CD4-positive, alpha-beta memory T cell (primary cell): ENCODE measurements at regions of chr5 and their contacts with region 1.

Region 1: DNA sequence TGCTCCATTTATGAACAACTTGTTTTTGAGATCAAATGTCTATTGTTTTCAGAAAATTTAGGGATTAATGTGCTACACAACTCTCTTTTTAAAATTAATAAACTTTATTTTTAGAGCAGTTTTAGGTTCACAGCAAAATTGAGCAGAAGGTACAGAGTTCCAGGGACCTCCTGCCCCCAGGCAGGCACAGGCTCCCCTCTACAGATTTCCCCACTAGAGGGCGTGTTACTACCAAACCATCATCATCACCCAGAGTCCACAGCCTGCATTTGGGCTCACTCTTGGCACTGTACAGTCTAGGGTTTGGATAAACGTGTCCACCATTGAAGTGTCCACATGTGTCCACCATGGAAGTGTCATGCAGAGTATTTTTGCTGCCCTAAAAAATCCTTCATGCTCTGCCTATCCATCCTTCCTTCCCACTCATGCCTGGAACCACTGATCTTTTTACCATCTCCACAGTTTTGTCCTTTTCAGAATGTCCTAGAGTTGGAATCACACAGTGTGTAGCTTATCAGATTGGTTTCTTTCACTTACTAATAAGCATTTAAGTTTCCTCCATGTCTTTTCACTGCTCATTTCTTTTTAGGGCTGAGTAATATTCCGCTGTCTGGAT is 61.7 kb downstream of the MRPL36 start:
- DNase-seq: peak in 4 of 5 donors; percentile 47 to 53 (median 50)
- H3K4me3 ChIP-seq: no peak overlapping the region
- H3K4me3 Mint-ChIP-seq: no peak overlapping the region
- H3K27ac ChIP-seq: no peak overlapping the region
- H3K27ac Mint-ChIP-seq: no peak overlapping the region
- H3K4me1 ChIP-seq: no peaks in the 10 kb centered on the region
- H3K4me1 Mint-ChIP-seq: no peaks in the 10 kb centered on the region
- H3K27me3 ChIP-seq: no peaks in the 10 kb centered on the region
- H3K27me3 Mint-ChIP-seq: peaks cover 14 to 18% of the 10 kb centered on the region in 2 donors

Region 2: GRCh38 chr5:1792842-1793266 is 55.0 kb after region 1 on chr5:
- CTCF ChIA-PET with region 1: interaction called, 11 read pairs
- POLR2A ChIA-PET with region 1: no interaction called
- intact Hi-C with region 1: no loop called
- DNase-seq: peak; percentile 82 to 90 (median 85)
- H3K4me3 ChIP-seq: peak overlapping the region; percentile 34 to 37
- H3K4me3 Mint-ChIP-seq: peak overlapping the region; percentile 70 to 91 (median 84)
- H3K27ac ChIP-seq: peak overlapping the region; percentile 60
- H3K27ac Mint-ChIP-seq: peak overlapping the region; percentile 90 to 99 (median 94)
- H3K4me1 ChIP-seq: peaks cover 56% of the 10 kb centered on the region
- H3K4me1 Mint-ChIP-seq: peaks cover 34 to 86% (median 47%) of the 10 kb centered on the region in 4 donors
- H3K27me3 ChIP-seq: no peaks in the 10 kb centered on the region
- H3K27me3 Mint-ChIP-seq: peaks cover 0 to 2% of the 10 kb centered on the region in 2 donors

Region 3: GRCh38 chr5:1799602-1800471 is 61.9 kb after region 1 on chr5 and contains the start of gene MRPL36:
- CTCF ChIA-PET with region 1: interaction called, 5 read pairs
- POLR2A ChIA-PET with region 1: interaction called, 3 read pairs
- intact Hi-C with region 1: loop called (anchors 5 kb)
- DNase-seq: peak; percentile 84 to 92 (median 88)
- H3K4me3 ChIP-seq: peak within 1 kb of the TSS; percentile 93 to 97
- H3K4me3 Mint-ChIP-seq: peak within 1 kb of the TSS; percentile 94 to 99 (median 96)
- H3K27ac ChIP-seq: peak within 1 kb of the TSS; percentile 91
- H3K27ac Mint-ChIP-seq: peak within 1 kb of the TSS; percentile 92 to 100 (median 99)
- H3K4me1 ChIP-seq: peaks cover 61% of the 10 kb centered on the region
- H3K4me1 Mint-ChIP-seq: peaks cover 28 to 76% (median 48%) of the 10 kb centered on the region in 4 donors
- H3K27me3 ChIP-seq: no peaks in the 10 kb centered on the region
- H3K27me3 Mint-ChIP-seq: no peaks in the 10 kb centered on the region
- total RNA-seq, gene MRPL36: 30.7 to 34.8 TPM

Region 4: DNA sequence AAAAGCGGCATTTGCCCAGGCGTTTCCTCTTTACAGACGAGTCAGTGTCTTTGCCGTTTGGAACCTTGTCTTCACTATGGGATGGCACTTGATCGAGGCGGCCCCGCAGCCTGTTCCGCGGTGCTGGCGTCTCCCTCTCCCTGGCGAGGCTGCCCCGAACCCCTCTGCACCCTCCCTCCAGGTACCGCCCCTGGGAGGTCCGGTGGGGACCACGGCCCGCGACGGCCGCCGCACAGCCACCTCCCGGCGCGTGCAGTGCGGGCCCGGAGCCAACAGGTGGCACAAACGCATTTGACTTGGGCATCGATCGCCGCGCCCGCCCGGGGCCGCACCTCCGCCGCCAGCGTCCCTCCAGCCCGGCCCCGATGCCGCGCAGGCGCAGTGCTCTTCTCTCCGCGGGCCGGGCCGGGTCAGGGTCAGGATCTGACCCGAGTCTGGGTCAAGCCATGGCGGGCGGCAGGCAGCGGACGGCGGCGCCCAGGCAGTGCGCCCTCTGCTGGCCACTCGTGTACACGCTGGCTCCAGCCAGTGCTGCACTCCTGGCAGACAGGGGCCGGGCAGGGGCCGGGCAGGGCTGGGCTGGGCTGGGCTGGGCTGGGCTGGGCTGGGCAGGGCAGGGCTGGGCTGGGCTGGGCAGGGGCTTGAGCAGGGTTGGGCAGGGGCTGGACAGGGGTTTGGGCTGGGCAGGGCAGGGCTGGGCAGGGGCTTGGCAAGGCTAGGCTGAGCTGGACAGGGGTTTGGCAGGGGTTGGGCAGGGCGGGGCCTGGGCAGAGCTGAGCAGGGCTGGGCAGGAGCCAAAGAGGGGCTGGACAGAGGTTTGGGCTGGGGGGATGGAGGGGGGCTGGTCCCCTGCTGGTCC is 300.7 kb after region 1 on chr5:
- CTCF ChIA-PET with region 1: interaction called, 5 read pairs
- POLR2A ChIA-PET with region 1: no interaction called
- intact Hi-C with region 1: loop called (anchors 1 kb)
- DNase-seq: peak; percentile 45 to 66 (median 56)
- H3K4me3 ChIP-seq: peak overlapping the region in 1 of 2 donors; percentile 34
- H3K4me3 Mint-ChIP-seq: peak overlapping the region; percentile 57 to 81 (median 68)
- H3K27ac ChIP-seq: no peak overlapping the region
- H3K27ac Mint-ChIP-seq: no peak overlapping the region
- H3K4me1 ChIP-seq: no peaks in the 10 kb centered on the region
- H3K4me1 Mint-ChIP-seq: no peaks in the 10 kb centered on the region
- H3K27me3 ChIP-seq: peaks cover 14% of the 10 kb centered on the region
- H3K27me3 Mint-ChIP-seq: peaks cover 17 to 26% of the 10 kb centered on the region in 2 donors